H1 (cell line): ENCODE measurements at regions of chr3 and their contacts with region 1.

Region 1: DNA sequence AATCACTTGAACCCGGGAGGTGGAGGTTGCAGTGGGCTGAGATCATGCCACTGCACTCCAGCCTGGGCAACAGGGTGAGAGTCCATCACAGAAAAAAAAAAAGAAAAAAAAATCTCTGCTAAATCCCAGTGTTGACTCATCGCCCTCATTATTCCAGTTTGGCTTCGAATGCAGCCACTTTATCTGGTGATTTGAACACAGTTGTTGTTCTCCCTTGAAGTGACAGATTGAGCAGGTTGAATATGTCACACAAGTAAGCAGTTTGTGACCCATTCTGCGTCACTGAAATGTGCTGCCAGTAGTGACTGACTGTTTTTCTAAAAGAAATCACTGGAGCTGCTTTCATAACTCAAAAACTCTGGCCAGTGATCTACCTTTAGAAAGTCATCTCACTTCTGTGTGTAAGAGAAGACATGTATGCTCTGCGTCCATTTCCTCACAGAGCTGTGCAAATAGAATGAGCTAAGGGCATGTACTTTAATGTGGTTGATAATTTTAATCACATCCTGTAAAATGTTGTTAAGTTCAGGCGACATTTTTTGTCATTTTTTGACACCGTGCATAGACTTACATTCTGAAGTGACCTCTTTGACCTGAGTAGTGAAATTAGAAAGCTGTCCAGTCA is 12.5 kb downstream of the DOCK3 start:
- DNase-seq: no peak
- H3K4me3 ChIP-seq: no peak overlapping the region
- H3K27ac ChIP-seq: no peak overlapping the region
- H3K4me1 ChIP-seq: peaks cover 2 to 11% (median 7%) of the 10 kb centered on the region in 4 experiments; a peak in 4 of 7 replicates
- H3K27me3 ChIP-seq: no peaks in the 10 kb centered on the region
- CTCF ChIP-seq: no peak
- EP300 ChIP-seq: no peak
- POLR2A ChIP-seq: no peak
- RAD21 ChIP-seq: no peak

Region 2: DNA sequence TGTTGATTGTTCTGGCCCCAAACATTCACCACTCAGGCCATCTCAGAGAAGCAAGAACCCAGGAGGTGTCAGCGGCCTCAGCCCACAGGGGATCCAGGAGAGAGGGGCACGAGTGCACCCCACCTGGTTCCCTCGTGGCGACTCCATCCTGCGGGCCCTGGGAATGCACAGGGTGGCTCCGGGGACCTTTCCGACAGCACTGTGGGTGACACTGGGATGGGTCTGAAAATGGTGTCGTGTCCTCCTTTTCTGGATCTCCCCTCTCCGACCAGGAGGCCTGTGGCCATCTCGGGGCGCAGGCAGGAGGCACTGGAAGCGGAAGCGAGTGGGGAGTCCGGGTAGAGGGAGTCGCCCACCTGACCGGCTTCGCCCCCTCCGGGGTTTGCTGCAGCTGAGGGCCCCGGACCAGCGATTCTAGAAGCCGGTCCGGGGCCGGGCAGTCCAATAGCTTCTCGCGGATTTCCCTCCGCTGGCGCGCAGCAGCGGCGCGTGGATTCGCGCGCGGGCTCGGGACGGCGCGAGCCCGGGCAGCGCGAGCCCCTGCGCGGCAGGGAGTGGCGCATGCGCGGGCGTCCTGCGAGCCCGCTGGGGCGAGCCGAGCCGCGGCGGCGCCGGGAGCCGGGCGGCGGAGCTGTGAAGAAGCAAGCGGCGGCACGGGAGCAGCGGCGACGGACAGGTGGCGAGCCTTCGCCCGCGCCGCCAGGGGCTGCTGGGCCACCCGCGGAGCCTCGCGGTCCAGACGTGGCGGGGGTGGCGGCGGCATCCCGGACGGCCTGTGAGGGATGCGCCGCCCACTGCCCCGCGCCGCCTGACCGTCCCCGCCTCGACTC is 12.7 kb before region 1 on chr3 and contains the start of gene DOCK3:
- CTCF ChIA-PET with region 1: interaction called, 10 read pairs
- POLR2A ChIA-PET with region 1: interaction called, 3 read pairs
- DNase-seq: peak in 1 of 2 experiments; percentile 72
- H3K4me3 ChIP-seq: peak within 1 kb of the TSS; percentile 51 to 81 (median 62)
- H3K27ac ChIP-seq: peak within 1 kb of the TSS; percentile 34; the same call in 1 of the 2 replicates
- H3K4me1 ChIP-seq: peaks cover 4 to 10% (median 6%) of the 10 kb centered on the region in 4 experiments
- H3K27me3 ChIP-seq: peaks cover 0 to 16% (median 14%) of the 10 kb centered on the region in 4 experiments; a peak in 6 of 7 replicates
- CTCF ChIP-seq: no peak
- EP300 ChIP-seq: no peak
- POLR2A ChIP-seq: 0 out of 3 replicates have a peak, but pooled peaks of 1 of the 2 experiments have one; percentile 16
- RAD21 ChIP-seq: no peak
- total RNA-seq, gene DOCK3: 4.6 and 5.0 TPM in 2 replicates